Common myeloid progenitor, CD34-positive (primary cell): ENCODE measurements at regions of chr5 and their contacts with region 1.

Region 1: GRCh38 chr5:133111299-133111698 is 59.5 kb downstream of the HSPA4 start:
- DNase-seq: peak; percentile 83 to 89 (median 85)
- H3K4me3 ChIP-seq: no peak overlapping the region
- H3K27ac ChIP-seq: no peak overlapping the region
- H3K4me1 ChIP-seq: peaks cover 0 to 3% (median under 1%) of the 10 kb centered on the region in 4 experiments
- H3K27me3 ChIP-seq: no peaks in the 10 kb centered on the region

Region 2: GRCh38 chr5:133287500-133287899 is 176.2 kb after region 1 on chr5:
- CTCF ChIA-PET with region 1: interaction called, 37 read pairs
- POLR2A ChIA-PET with region 1: no interaction called
- DNase-seq: peak; percentile 35 to 42 (median 35)
- H3K4me3 ChIP-seq: no peak overlapping the region
- H3K27ac ChIP-seq: no peak overlapping the region
- H3K4me1 ChIP-seq: no peaks in the 10 kb centered on the region
- H3K27me3 ChIP-seq: peaks cover 0 to 2% (median 0%) of the 10 kb centered on the region in 5 experiments